Activated naive CD4-positive, alpha-beta T cell treated with anti-CD3 and anti-CD28 coated beads for 36 hours (primary cell): ENCODE measurements at regions of chr7 and their contacts with region 1.

Region 1: GRCh38 chr7:25389489-25390106 is 161.3 kb upstream of the NPVF start:
- DNase-seq: peak; percentile 21
- H3K4me3 Mint-ChIP-seq: no peak overlapping the region
- H3K27ac Mint-ChIP-seq: no peak overlapping the region
- H3K4me1 Mint-ChIP-seq: peaks cover 3% of the 10 kb centered on the region
- H3K27me3 Mint-ChIP-seq: peaks cover 2% of the 10 kb centered on the region

Region 2: GRCh38 chr7:25559581-25560367 is 170.2 kb after region 1 on chr7:
- CTCF ChIA-PET with region 1: interaction called, 113 read pairs
- intact Hi-C with region 1: no loop called
- DNase-seq: no peak
- H3K4me3 Mint-ChIP-seq: no peak overlapping the region
- H3K27ac Mint-ChIP-seq: no peak overlapping the region
- H3K4me1 Mint-ChIP-seq: peaks cover 11% of the 10 kb centered on the region
- H3K27me3 Mint-ChIP-seq: no peaks in the 10 kb centered on the region